Right lobe of liver (tissue), 6 donors: ENCODE measurements at regions of chr9 and their contacts with region 1.

Region 1: GRCh38 chr9:14768405-14769229 is 46.1 kb upstream of the CER1 start:
- DNase-seq: no peak
- ATAC-seq: peak; percentile 71 to 84 (median 77)
- H3K4me3 ChIP-seq: no peak overlapping the region
- H3K27ac ChIP-seq: no peak overlapping the region
- H3K4me1 ChIP-seq: no peaks in the 10 kb centered on the region
- H3K27me3 ChIP-seq: no peaks in the 10 kb centered on the region
- CTCF ChIP-seq: peak; percentile 72 to 78 (median 74)
- POLR2A ChIP-seq: no peak

Region 2: DNA sequence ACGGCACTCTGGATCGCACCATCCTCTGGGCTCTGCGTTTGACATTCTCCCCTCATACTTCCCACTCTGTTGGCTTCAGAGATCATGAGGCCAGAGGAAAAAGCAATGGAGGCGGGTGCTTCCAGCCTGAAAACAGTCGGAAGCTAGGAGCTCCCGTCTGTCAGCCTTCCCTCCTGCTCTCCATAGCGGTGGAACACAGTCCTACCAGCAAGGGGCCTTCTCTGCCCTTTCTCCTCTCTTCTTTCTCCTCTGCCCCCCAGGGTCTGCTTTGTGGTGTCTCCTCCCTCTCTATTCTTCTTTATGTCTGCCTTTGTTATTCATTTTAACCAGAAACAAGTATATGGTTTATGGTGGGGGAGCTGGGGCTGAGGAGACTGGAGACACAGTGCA is 302.2 kb before region 1 on chr9:
- intact Hi-C with region 1: loop called in 1 of 2 experiments (anchors 5 kb)
- DNase-seq: no peak
- ATAC-seq: no peak
- H3K4me3 ChIP-seq: no peak overlapping the region
- H3K27ac ChIP-seq: no peak overlapping the region
- H3K4me1 ChIP-seq: no peaks in the 10 kb centered on the region
- H3K27me3 ChIP-seq: no peaks in the 10 kb centered on the region
- CTCF ChIP-seq: no peak
- POLR2A ChIP-seq: no peak

Region 3: DNA sequence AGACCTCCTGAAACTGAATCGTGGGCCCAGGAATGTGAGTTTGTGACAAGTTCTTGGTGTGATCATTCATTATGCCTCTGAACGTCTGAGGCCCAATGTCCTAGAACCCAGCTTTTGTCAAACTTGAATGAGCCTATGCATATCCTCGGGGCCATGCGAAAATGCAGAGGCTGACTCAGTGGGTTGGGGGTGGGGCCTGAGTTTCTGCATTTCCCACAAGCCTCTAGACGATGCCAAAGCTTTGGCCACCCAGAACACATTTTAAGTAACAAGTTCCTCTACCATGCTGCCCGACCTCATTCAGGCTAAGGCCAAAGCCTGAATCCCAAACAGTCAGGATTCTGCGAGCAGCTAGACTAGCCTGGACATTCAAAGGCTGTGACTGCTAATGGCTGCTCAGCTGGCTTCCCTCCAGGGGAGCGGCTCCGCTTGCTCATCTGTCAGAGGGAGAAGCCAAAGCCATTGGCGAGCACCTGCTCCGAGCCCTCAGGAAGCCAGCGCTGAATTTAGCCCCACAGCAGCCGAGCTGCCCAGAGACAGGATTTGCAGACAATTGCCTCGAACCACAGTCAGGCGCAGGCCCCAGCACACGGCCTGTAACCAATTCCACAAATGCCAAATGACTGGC is 252.9 kb before region 1 on chr9:
- intact Hi-C with region 1: no loop called
- DNase-seq: no peak
- ATAC-seq: no peak
- H3K4me3 ChIP-seq: no peak overlapping the region
- H3K27ac ChIP-seq: no peak overlapping the region
- H3K4me1 ChIP-seq: no peaks in the 10 kb centered on the region
- H3K27me3 ChIP-seq: no peaks in the 10 kb centered on the region
- CTCF ChIP-seq: no peak
- POLR2A ChIP-seq: no peak

Region 4: GRCh38 chr9:14616188-14616982 is 152.2 kb before region 1 on chr9:
- intact Hi-C with region 1: loop called in 1 of 2 experiments (anchors 10 kb)
- DNase-seq: no peak
- ATAC-seq: peak; percentile 81 to 88 (median 84)
- H3K4me3 ChIP-seq: no peak overlapping the region
- H3K27ac ChIP-seq: no peak overlapping the region
- H3K4me1 ChIP-seq: no peaks in the 10 kb centered on the region
- H3K27me3 ChIP-seq: no peaks in the 10 kb centered on the region
- CTCF ChIP-seq: peak; percentile 63 to 66 (median 65)
- POLR2A ChIP-seq: no peak

Region 5: DNA sequence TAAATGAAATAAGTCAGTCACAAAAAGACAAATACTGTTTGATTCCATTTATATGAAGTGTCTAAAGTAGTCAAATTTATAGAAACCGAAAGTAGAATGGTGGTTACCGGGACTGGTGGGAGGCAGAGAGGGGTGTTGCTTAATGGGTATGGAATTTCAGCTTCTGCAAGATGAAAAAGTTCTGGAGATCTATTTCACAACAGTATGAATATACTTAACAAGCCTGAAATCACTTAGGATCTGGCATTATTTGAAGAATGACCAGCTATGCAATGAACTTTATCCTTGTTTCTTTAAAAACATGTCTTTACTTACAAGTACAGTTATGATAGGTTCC is 156.2 kb after region 1 on chr9:
- intact Hi-C with region 1: no loop called
- DNase-seq: no peak
- ATAC-seq: no peak
- H3K4me3 ChIP-seq: no peak overlapping the region
- H3K27ac ChIP-seq: no peak overlapping the region
- H3K4me1 ChIP-seq: no peaks in the 10 kb centered on the region
- H3K27me3 ChIP-seq: no peaks in the 10 kb centered on the region
- CTCF ChIP-seq: no peak
- POLR2A ChIP-seq: no peak